CD4-positive, alpha-beta T cell (primary cell): ENCODE measurements at regions of chr17 and their contacts with region 1.

Region 1: GRCh38 chr17:81394921-81395599 is at the start of gene BAHCC1:
- DNase-seq: peak; percentile 53 to 90 (median 72)
- ATAC-seq: peak; percentile 70
- H3K4me3 ChIP-seq: peak within 1 kb of the TSS; percentile 12
- H3K4me3 Mint-ChIP-seq: peak within 1 kb of the TSS; percentile 76
- H3K27ac ChIP-seq: no peak within 1 kb of the TSS
- H3K27ac Mint-ChIP-seq: peak within 1 kb of the TSS; percentile 68
- H3K4me1 ChIP-seq: peaks cover 66% of the 10 kb centered on the region
- H3K4me1 Mint-ChIP-seq: peaks cover 30% of the 10 kb centered on the region
- H3K27me3 ChIP-seq: peaks cover 65 to 88% of the 10 kb centered on the region in 2 experiments
- H3K27me3 Mint-ChIP-seq: peaks cover 59% of the 10 kb centered on the region
- CTCF ChIP-seq: no peak
- total RNA-seq, gene BAHCC1: 0.20 to 0.41 TPM

Region 2: DNA sequence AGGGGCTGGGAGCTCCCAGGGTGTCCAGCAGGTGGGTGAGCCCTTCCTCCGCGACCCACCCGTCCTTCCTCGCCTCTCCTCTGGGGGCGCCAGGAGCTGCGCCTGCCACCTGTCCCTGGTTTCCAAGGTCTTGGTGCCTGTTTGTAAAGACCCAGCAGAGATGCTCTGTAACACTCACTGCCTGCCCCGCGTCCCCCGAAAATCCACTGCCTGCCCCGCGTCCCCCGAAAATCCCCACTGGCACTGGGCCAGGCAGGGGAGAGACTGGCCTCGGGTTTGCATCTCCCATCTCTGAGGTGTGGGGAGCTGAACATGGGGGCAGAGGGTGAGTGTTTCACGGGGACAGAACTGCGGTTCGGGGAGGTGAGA is 45.8 kb after region 1 on chr17:
- CTCF ChIA-PET with region 1: no interaction called
- POLR2A ChIA-PET with region 1: no interaction called
- intact Hi-C with region 1: no loop called
- DNase-seq: no peak
- ATAC-seq: no peak
- H3K4me3 ChIP-seq: no peak overlapping the region
- H3K4me3 Mint-ChIP-seq: no peak overlapping the region
- H3K27ac ChIP-seq: no peak overlapping the region
- H3K27ac Mint-ChIP-seq: no peak overlapping the region
- H3K4me1 ChIP-seq: peaks cover 5% of the 10 kb centered on the region
- H3K4me1 Mint-ChIP-seq: no peaks in the 10 kb centered on the region
- H3K27me3 ChIP-seq: peaks cover 0 to 10% of the 10 kb centered on the region in 2 experiments
- H3K27me3 Mint-ChIP-seq: peaks cover 4% of the 10 kb centered on the region
- CTCF ChIP-seq: no peak

Region 3: DNA sequence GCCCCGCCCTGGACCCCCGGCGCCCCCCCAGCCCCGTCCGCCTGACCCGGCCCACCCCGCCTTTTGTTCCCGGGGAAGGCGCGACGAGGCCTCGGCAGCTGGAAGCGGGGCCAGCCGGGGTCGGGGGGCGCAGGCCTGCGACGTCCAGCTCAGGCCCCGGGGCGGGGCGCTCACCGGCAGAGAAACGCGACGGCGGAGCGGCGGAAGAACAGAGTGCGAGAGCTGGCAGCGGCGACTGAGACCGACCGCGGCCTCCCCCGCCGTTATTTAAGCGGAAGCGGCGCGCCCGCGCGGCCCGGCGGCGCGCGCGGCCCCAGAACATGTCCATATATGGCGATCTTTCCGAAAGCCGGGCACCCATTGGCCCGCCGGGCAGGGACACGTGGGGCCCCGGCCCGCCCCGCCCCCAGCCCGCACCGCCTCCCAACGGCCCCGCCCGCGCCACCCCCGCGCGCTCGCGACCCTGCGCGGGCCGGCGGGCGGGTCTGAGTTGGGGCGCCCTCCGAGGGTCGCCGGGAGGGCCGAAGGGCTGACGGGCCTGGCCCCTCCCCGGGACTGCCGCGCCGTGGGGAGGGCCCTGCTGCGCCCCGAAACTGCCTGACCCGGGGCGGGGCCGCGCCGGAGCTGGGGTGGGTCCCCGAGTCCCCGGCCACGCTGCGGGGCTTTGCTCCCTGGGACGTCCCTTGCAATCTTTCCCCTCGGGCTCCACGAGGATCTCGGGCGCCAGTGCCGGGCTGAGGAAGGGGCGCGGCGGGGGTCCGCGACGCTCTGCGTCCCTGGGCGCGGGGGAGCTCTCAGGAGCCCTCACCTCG is 117.7 kb after region 1 on chr17 and contains the start of gene ACTG1:
- CTCF ChIA-PET with region 1: no interaction called
- POLR2A ChIA-PET with region 1: interaction called, 15 read pairs
- intact Hi-C with region 1: loop called (anchors 2 to 5 kb)
- DNase-seq: peak; percentile 84 to 96 (median 92)
- ATAC-seq: peak; percentile 66
- H3K4me3 ChIP-seq: peak within 1 kb of the TSS; percentile 98
- H3K4me3 Mint-ChIP-seq: peak within 1 kb of the TSS; percentile 99
- H3K27ac ChIP-seq: peak within 1 kb of the TSS; percentile 72 to 87
- H3K27ac Mint-ChIP-seq: peak within 1 kb of the TSS; percentile 90
- H3K4me1 ChIP-seq: peaks cover 72% of the 10 kb centered on the region
- H3K4me1 Mint-ChIP-seq: peaks cover 57% of the 10 kb centered on the region
- H3K27me3 ChIP-seq: no peaks in the 10 kb centered on the region
- H3K27me3 Mint-ChIP-seq: no peaks in the 10 kb centered on the region
- CTCF ChIP-seq: no peak
- total RNA-seq, gene ACTG1: 1,296 to 1,318 TPM